Mammary epithelial cell (primary cell): ENCODE measurements at regions of chr14 and their contacts with region 1.

Region 1: GRCh38 chr14:96176811-96177603 is 27.6 kb upstream of the BDKRB2 start:
- DNase-seq: peak; percentile 73
- H3K4me3 ChIP-seq: no peak overlapping the region
- H3K27ac ChIP-seq: peak overlapping the region; percentile 25
- H3K4me1 ChIP-seq: peaks cover 31% of the 10 kb centered on the region
- H3K27me3 ChIP-seq: no peaks in the 10 kb centered on the region
- CTCF ChIP-seq: no peak

Region 2: DNA sequence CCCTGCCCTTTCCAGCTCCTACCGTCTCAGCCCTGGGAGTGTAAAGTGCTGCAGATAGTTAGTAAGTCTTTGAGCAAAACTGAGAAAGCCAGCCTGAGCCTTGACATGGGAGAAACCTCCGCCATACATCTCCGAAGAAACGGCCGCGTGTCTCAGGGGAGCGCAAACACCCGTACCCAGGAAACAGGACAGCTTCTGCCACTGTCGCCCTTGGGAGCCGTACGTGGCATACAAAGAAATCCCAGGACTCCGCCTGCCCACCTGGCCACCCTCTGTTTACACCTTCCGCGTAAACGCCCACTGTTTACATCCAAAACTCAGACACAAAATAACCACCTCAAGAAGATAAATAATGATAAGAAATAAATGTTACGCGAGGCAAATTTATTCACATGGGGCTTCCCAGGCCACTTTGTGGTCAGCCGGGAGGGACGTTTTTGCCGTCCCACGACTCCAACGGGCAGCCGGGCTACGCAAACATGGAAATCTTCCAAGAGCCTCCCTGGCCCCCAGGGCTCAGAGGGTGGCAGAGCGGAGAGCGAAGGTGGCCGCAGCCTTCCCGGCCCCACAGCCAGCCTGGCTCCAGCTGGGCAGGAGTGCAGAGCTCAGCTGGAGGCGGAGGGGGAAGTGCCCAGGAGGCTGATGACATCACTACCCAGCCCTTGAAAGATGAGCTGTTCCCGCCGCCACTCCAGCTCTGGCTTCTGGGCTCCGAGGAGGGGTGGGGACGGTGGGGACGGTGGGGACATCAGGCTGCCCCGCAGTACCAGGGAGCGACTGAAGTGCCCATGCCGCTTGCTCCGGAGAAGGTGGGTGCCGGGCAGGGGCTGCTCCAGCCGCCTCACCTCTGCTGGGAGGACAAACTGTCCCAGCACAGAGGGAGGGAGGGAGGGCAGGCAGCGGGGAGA is 27.4 kb after region 1 on chr14 and contains the start of gene BDKRB2:
- CTCF ChIA-PET with region 1: no interaction called
- dilution Hi-C with region 1: no loop called
- in situ Hi-C with region 1: no loop called
- intact Hi-C with region 1: loop called (anchors 2 kb)
- DNase-seq: peak; percentile 85
- H3K4me3 ChIP-seq: peak within 1 kb of the TSS; percentile 44 to 68 (median 65)
- H3K27ac ChIP-seq: peak within 1 kb of the TSS; percentile 75
- H3K4me1 ChIP-seq: peaks cover 42% of the 10 kb centered on the region
- H3K27me3 ChIP-seq: no peaks in the 10 kb centered on the region
- CTCF ChIP-seq: no peak
- total RNA-seq, gene BDKRB2: 7.5 to 21.1 TPM

Region 3: DNA sequence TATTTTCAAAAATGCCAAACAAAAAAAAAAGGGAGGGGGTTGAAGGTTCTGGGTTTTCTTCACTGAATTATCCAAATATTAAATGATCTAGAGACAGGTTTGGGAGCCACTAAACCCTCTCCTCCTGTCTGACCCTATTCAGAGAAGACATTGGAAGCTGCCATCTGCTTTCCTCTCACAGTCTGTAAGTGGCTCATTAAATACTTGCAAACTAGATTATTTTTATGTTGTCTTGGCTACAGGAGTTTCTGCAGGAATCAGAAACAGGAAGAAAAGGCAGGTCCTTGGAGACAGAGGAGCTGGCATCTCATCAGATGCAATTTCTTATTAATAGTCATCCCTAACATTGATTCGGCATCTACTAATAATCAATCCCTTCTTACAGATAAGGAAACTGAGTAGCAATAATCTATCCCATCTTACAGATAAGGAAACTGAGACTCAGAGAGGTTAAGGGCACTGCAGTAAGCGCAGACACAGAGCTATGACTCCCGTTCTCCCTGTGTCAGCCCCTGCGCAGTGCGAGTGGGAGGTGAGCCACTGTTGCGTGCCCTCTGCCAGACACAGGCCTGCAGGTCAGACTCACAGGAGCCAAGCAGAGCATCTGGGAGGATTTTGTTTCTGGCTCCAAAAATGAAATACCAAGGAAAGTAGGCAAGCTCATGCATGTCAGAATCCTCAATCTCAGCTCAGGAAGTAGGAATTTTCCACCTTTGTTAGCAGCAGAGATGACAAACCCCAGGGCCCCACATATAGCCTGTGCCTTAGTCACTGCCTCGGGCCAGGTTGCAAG is 38.6 kb after region 1 on chr14:
- CTCF ChIA-PET with region 1: no interaction called
- dilution Hi-C with region 1: loop called (anchors 5 kb)
- in situ Hi-C with region 1: no loop called
- intact Hi-C with region 1: no loop called
- DNase-seq: peak; percentile 75
- H3K4me3 ChIP-seq: no peak overlapping the region
- H3K27ac ChIP-seq: peak overlapping the region; percentile 23
- H3K4me1 ChIP-seq: peaks cover 18% of the 10 kb centered on the region
- H3K27me3 ChIP-seq: no peaks in the 10 kb centered on the region
- CTCF ChIP-seq: no peak